Activated CD4-positive, alpha-beta memory T cell treated with anti-CD3 and anti-CD28 coated beads for 36 hours (primary cell): ENCODE measurements at regions of chr3 and their contacts with region 1.

Region 1: DNA sequence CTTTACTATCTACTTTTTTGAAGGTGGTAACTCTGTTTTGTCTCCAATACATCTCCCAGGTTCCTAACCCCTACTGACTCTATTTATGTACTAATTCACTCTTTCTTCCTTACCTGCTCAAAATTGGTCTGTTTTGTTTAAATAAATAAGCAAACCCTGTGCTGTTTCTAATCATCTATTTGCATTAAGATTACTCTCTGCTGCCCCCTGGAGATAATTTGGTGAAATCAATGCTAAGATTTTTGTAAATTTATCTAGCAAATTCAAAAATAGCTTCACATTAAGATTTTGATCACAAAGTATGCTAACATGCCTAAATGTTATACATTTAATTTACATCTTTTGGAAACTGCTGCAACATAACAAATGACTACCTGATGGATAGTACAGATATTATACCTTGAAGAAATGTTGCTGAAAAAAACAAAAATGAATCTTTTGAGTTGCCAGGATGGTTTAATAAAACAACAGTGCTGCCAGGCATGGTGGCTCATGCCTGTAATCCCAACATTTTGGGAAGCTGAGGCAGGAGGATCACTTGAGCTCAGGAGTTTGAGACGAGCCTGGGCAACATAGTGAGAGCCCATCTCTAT is 4.4 kb upstream of the CD200R1 start:
- DNase-seq: no peak
- H3K4me3 Mint-ChIP-seq: no peak overlapping the region
- H3K27ac Mint-ChIP-seq: no peak overlapping the region
- H3K4me1 Mint-ChIP-seq: peaks cover 68% of the 10 kb centered on the region
- H3K27me3 Mint-ChIP-seq: no peaks in the 10 kb centered on the region

Region 2: GRCh38 chr3:112333002-112333380 is 646.3 kb before region 1 on chr3 and contains the start of gene CD200:
- CTCF ChIA-PET with region 1: no interaction called
- POLR2A ChIA-PET with region 1: no interaction called
- intact Hi-C with region 1: loop called (anchors 10 kb)
- DNase-seq: peak; percentile 71
- H3K4me3 Mint-ChIP-seq: peak within 1 kb of the TSS; percentile 87
- H3K27ac Mint-ChIP-seq: peak within 1 kb of the TSS; percentile 88
- H3K4me1 Mint-ChIP-seq: peaks cover 46% of the 10 kb centered on the region
- H3K27me3 Mint-ChIP-seq: no peaks in the 10 kb centered on the region
- total RNA-seq, gene CD200: 34.2 to 34.5 TPM

Region 3: GRCh38 chr3:112582244-112582874 is 397.0 kb before region 1 on chr3:
- CTCF ChIA-PET with region 1: interaction called, 12 read pairs
- POLR2A ChIA-PET with region 1: no interaction called
- intact Hi-C with region 1: loop called (anchors 2 kb)
- DNase-seq: peak; percentile 56
- H3K4me3 Mint-ChIP-seq: no peak overlapping the region
- H3K27ac Mint-ChIP-seq: no peak overlapping the region
- H3K4me1 Mint-ChIP-seq: peaks cover 5% of the 10 kb centered on the region
- H3K27me3 Mint-ChIP-seq: no peaks in the 10 kb centered on the region

Region 4: DNA sequence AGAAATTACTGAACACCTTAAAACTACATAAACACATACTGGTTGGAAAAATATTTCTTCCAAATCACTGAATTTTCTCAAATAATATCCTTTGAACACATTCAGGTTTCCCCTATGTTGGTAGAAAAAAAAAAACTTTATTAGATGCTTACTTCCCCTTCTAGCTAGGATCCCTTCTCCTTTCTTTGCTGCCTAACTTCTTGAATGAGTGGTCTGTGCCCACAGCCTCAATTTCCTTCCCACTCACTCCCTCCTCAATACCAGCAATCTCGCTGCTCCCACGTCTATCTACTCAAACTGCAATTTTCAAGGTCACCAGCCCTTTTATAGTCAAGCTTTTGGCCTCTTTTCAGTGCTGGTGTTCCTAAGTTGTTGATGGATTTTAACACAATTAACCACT is 12.7 kb before region 1 on chr3:
- CTCF ChIA-PET with region 1: interaction called, 29 read pairs
- POLR2A ChIA-PET with region 1: no interaction called
- intact Hi-C with region 1: no loop called
- DNase-seq: no peak
- H3K4me3 Mint-ChIP-seq: no peak overlapping the region
- H3K27ac Mint-ChIP-seq: no peak overlapping the region
- H3K4me1 Mint-ChIP-seq: peaks cover 61% of the 10 kb centered on the region
- H3K27me3 Mint-ChIP-seq: no peaks in the 10 kb centered on the region

Region 5: DNA sequence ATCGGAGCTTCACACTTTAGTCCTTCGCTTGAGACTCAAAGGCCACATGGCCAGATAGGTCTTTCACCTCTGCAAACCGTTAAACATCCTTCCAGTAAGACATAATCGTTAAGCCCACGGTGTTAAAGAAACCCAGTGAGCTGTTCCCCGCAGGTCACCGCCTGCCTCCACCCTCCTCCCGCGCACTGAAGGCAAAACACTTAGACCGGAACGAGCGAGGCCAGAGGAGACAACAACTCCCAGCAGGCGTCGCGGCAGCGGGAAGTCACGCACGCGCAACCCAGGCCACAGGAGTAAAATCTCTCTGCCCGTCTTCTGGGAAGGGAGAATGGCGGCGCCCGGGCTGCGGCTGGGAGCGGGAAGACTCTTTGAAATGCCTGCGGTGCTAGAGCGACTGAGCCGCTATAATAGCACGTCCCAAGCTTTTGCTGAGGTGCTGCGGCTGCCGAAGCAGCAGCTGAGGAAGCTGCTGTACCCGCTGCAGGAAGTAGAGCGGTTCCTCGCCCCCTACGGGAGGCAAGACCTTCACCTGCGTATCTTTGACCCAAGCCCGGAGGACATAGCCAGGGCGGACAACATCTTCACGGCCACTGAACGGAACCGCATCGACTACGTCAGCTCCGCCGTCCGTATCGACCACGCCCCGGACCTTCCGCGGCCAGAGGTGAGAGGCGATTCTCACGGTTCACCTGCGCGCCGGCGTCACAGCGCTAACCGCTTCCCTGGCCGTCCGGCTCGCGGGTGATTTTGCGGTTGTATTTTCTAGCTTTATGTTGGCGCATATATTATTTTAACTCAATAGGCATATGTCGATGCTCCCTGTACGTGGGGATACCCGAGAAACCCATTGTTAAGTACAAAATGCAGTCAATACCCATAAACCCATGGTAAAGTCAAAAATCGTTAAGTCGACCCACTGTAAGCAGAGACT is 11.6 kb after region 1 on chr3 and contains the start of gene GTPBP8:
- CTCF ChIA-PET with region 1: interaction called, 36 read pairs
- POLR2A ChIA-PET with region 1: interaction called, 5 read pairs
- intact Hi-C with region 1: no loop called
- DNase-seq: peak; percentile 93
- H3K4me3 Mint-ChIP-seq: peak within 1 kb of the TSS; percentile 91
- H3K27ac Mint-ChIP-seq: peak within 1 kb of the TSS; percentile 94
- H3K4me1 Mint-ChIP-seq: peaks cover 57% of the 10 kb centered on the region
- H3K27me3 Mint-ChIP-seq: no peaks in the 10 kb centered on the region
- total RNA-seq, gene GTPBP8: 34.7 to 35.7 TPM

Region 6: GRCh38 chr3:113148286-113148685 is 168.9 kb after region 1 on chr3:
- CTCF ChIA-PET with region 1: no interaction called
- POLR2A ChIA-PET with region 1: no interaction called
- intact Hi-C with region 1: no loop called
- DNase-seq: no peak
- H3K4me3 Mint-ChIP-seq: no peak overlapping the region
- H3K27ac Mint-ChIP-seq: no peak overlapping the region
- H3K4me1 Mint-ChIP-seq: no peaks in the 10 kb centered on the region
- H3K27me3 Mint-ChIP-seq: no peaks in the 10 kb centered on the region

Region 7: DNA sequence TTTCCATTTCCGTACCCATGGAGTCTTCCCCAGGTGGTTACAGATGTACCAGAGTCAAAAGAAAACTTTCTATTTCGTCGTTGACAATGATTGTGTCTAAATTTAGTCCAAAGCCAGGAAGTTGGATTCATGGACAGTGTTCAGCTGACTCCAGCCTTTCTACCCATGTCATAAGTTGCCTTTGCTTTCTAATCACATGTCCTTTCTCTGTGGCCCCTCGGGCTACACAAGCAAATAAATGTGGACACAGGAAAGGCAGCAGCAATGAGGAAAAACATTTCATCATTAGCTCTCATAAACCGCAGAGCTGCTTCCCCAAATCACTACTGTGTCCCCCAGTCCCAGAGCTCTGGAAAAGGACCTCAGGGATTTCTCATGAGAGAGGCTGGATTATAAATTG is 635.1 kb after region 1 on chr3:
- CTCF ChIA-PET with region 1: no interaction called
- POLR2A ChIA-PET with region 1: no interaction called
- intact Hi-C with region 1: no loop called
- DNase-seq: no peak
- H3K4me3 Mint-ChIP-seq: no peak overlapping the region
- H3K27ac Mint-ChIP-seq: no peak overlapping the region
- H3K4me1 Mint-ChIP-seq: no peaks in the 10 kb centered on the region
- H3K27me3 Mint-ChIP-seq: no peaks in the 10 kb centered on the region